Vagina (tissue), 2 donors: ENCODE measurements at regions of chr2 and their contacts with region 1.

Region 1: GRCh38 chr2:193348055-193348454 is 1153.3 kb upstream of the TMEFF2 start:
- DNase-seq: no peak
- H3K4me3 ChIP-seq: peak overlapping the region in 1 of 2 donors; percentile 25
- H3K27ac ChIP-seq: no peak overlapping the region
- H3K4me1 ChIP-seq: peaks cover 5% of the 10 kb centered on the region
- H3K27me3 ChIP-seq: no peaks in the 10 kb centered on the region
- CTCF ChIP-seq: no peak
- POLR2A ChIP-seq: no peak

Region 2: DNA sequence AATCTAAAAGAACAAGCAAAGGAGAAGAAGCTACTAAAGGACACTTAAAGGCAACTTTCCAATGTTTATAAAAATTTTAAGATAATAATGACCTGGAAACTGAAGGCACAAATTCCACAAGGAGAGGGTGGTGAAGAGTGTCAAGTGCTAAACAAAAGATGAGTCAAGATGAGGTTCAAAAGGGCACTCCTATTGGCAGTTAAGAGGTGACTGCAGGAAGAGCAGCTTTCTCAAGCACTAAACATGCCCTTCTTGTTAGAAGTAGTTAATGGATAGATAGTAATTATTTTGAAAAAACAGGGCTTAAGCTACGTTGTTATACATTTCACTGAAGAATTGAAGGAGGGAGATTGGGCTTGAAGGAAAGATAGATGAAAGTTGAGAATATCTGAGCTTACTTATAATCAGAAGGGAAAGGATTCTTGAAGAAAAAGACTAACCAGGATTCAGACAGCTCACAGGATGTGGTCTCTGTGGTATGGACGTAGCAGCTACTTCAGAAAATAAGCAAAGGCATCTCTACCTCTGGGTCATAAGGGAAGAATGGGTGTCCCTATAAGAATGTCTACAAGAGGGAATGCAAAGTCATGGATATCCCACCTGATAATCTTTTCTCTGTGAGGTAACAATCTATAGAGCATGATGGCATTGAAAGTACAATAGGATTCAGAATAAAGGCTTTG is 1854.2 kb after region 1 on chr2:
- intact Hi-C with region 1: loop called (anchors 5 kb)
- DNase-seq: no peak
- H3K4me3 ChIP-seq: no peak overlapping the region
- H3K27ac ChIP-seq: no peak overlapping the region
- H3K4me1 ChIP-seq: no peaks in the 10 kb centered on the region
- H3K27me3 ChIP-seq: no peaks in the 10 kb centered on the region
- CTCF ChIP-seq: no peak
- POLR2A ChIP-seq: no peak